ENCODE measurements at regions of chr3 and their contacts with region 1.

Region 1: DNA sequence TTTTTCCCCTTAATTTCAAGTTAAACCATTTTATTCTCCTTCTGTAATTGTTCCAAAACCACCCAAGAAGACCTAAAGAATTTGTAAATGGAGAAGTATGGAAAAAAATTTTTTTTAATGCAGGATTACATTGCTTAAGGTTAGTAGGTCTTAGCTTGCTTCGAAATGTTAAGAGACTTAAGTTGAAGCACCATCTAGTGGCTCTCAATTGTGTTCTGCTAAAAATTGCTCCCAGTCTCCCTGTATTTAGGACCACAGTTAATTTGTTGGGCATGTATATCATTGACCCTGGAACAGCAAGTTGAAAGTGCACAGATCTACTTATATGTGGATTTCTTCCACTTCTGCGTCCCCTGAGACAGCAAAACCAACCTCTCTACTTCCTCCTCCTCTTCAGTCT is 32.4 kb downstream of the CD200R1L start:
- DNase-seq: no peak

Region 2: DNA sequence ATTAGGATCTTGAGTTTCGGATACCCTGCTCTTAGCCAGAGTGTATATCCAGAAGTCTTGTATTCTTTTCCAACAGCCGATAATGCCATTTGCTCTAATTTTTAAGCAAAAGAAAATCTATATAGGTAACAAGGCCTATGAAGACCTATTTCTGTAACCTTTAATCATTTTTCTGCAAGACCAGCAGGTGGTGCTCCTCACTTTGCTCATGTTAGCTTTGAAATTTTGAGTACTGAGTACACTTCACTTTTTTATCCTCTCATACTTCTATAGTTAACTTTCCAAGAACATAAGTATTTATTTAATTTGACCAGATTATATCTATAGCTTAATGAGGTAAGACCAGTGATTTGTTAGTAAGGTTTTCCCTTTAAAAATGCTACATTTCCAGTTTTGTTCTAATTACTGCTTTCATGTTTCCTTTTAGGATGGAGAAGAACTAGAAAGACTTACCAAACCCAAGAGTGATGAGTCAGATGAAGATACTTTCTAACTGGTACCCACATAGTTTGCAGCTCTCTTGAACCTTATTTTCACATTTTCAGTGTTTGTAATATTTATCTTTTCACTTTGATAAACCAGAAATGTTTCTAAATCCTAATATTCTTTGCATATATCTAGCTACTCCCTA is 231.9 kb before region 1 on chr3:
- intact Hi-C with region 1: loop called (anchors 5 kb)
- DNase-seq: no peak

Region 3: DNA sequence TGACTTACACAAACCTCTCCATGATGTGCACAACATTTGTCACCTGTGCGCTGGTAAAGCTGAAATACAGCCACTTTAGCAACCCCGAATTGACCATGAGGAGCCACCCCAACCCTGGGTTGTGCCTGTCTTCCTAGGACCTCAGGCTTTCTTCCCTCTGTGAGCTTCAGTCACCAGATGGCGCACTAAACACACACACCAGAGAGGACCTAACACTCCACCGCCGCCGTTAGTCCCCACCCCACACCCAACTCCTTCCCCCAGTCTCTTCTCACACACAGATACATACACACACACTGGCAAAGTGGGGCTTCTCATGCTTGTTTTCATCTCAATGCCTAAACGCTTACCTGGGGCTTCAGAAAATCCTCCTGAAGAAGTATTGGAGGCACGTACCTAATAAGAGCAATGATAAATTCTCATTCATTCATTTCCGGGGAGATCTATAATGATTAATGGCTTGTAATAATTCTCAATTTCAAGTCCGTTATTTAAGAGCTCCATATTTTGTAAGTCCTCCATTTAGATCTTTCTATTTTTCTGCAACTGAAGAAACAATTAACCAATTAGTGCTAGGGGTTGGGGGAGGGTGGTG is 171.3 kb before region 1 on chr3:
- intact Hi-C with region 1: loop called (anchors 1 kb)
- DNase-seq: peak; percentile 89

Region 4: DNA sequence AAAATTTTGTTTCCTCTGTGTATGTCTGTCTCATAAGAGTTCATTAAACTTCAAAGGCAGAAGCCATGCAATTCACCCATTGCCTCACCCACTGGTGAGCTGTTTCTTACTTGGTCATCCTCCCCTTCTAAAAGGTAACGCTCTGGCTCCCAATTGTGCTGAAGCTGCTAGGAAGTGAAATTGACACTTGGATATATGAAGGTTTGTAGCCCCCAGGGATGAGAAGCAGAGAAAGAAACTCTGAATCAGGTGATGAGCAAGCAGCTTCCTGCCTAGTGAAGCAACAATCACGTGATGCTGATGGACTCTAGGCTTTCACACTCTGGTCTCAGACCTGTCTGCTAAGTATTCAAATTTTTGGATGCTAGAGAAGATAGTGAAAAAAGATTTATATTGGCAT is 38.3 kb before region 1 on chr3:
- intact Hi-C with region 1: loop called (anchors 5 kb)
- DNase-seq: no peak

Region 5: GRCh38 chr3:112847692-112848091 is 33.4 kb after region 1 on chr3:
- intact Hi-C with region 1: no loop called
- DNase-seq: no peak